ENCODE measurements at regions of chr17 and their contacts with region 1.

Region 1: GRCh38 chr17:41695954-41696756 is 7.5 kb downstream of the EIF1 start:
- DNase-seq: peak; percentile 73
- H3K4me3 ChIP-seq: peak overlapping the region in 1 of 2 experiments; percentile 4; a peak in 1 of 4 replicates
- H3K27ac ChIP-seq: no peak overlapping the region
- H3K4me1 ChIP-seq: peaks cover under 1 to 2% of the 10 kb centered on the region in 2 experiments; a peak in 2 of 4 replicates
- H3K27me3 ChIP-seq: no peaks in the 10 kb centered on the region
- CTCF ChIP-seq: peak; percentile 90
- EP300 ChIP-seq: no peak
- RAD21 ChIP-seq: peak; percentile 52

Region 2: GRCh38 chr17:41251261-41251660 is 444.9 kb before region 1 on chr17:
- CTCF ChIA-PET with region 1: no interaction called
- POLR2A ChIA-PET with region 1: no interaction called
- DNase-seq: no peak
- H3K4me3 ChIP-seq: no peak overlapping the region
- H3K27ac ChIP-seq: no peak overlapping the region
- H3K4me1 ChIP-seq: no peaks in the 10 kb centered on the region
- H3K27me3 ChIP-seq: peaks cover 36% of the 10 kb centered on the region
- CTCF ChIP-seq: no peak
- EP300 ChIP-seq: no peak
- RAD21 ChIP-seq: no peak

Region 3: GRCh38 chr17:41464682-41465081 is 231.5 kb before region 1 on chr17:
- CTCF ChIA-PET with region 1: no interaction called
- POLR2A ChIA-PET with region 1: no interaction called
- DNase-seq: no peak
- H3K4me3 ChIP-seq: no peak overlapping the region
- H3K27ac ChIP-seq: no peak overlapping the region
- H3K4me1 ChIP-seq: peaks cover 11 to 17% of the 10 kb centered on the region in 2 experiments; a peak in 2 of 4 replicates
- H3K27me3 ChIP-seq: no peaks in the 10 kb centered on the region
- CTCF ChIP-seq: no peak
- EP300 ChIP-seq: 0 out of 4 replicates have a peak, but pooled peaks of 1 of the 2 experiments have one; percentile 33
- RAD21 ChIP-seq: no peak

Region 4: DNA sequence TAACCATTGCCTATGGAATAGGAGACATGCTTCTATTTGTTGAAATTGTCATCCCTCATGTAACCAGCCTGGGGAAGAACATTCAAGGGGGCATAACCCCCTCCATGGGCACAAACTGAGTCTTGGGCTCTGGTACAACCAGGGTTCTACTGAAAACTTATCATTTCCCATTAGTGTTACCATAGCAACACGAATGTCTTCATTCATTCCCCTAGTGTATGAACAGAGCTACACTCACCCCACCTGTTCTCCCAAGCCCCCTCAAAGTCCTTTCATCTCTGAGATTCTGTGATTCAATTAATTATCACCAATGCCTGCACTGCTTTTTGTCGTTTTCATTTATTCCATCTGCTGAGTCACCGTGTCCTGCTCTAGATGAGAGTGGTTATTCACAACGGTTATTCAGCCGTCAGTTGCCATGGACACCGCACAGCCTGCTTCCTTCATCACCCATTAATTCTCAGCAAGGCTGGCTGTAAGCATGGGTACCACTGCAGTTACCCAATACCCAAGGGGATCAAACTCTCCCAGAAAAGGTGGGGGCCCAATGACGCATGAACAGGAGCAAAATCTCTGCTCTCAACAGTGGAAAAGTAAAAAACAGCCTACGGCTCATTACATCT is 14.4 kb after region 1 on chr17:
- CTCF ChIA-PET with region 1: interaction called, 125 read pairs
- POLR2A ChIA-PET with region 1: interaction called, 4 read pairs
- DNase-seq: no peak
- H3K4me3 ChIP-seq: no peak overlapping the region
- H3K27ac ChIP-seq: no peak overlapping the region
- H3K4me1 ChIP-seq: peaks cover 0 to 3% of the 10 kb centered on the region in 2 experiments; a peak in 1 of 4 replicates
- H3K27me3 ChIP-seq: no peaks in the 10 kb centered on the region
- CTCF ChIP-seq: no peak
- EP300 ChIP-seq: no peak
- RAD21 ChIP-seq: no peak

Region 5: GRCh38 chr17:41717408-41718286 is 21.5 kb after region 1 on chr17:
- CTCF ChIA-PET with region 1: interaction called, 125 read pairs
- POLR2A ChIA-PET with region 1: interaction called, 5 read pairs
- DNase-seq: no peak
- H3K4me3 ChIP-seq: no peak overlapping the region
- H3K27ac ChIP-seq: no peak overlapping the region
- H3K4me1 ChIP-seq: no peaks in the 10 kb centered on the region
- H3K27me3 ChIP-seq: no peaks in the 10 kb centered on the region
- CTCF ChIP-seq: no peak
- EP300 ChIP-seq: no peak
- RAD21 ChIP-seq: no peak

Region 6: DNA sequence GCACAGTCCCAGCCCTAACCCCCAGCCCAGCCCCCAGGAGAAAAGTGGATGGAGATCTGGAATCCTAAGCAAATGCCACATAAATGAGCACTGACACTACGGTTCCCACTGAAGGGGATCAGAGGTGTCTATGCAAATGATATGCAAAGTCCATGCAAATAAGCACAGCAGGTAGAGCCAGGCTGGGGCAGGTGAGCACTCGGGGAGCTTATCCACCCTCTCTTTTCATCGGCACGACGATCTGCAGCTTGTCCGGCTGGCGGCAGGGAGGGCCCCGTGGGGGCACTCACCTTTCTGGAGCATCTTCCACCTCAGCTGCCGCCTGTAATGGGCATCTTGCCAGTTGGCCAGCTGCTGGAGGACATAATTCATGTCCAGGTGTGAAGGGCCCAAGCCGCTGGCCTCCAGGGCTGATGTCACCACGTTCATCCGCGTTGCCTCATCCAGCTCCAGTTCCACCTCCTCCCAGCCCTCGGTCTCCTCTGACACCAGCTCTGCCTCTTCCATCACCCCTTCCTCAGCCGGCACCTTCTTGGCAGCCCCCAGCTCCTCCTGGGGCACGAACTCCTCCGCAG is 28.4 kb after region 1 on chr17:
- CTCF ChIA-PET with region 1: interaction called, 20 read pairs
- POLR2A ChIA-PET with region 1: interaction called, 5 read pairs
- DNase-seq: no peak
- H3K4me3 ChIP-seq: no peak overlapping the region
- H3K27ac ChIP-seq: no peak overlapping the region
- H3K4me1 ChIP-seq: no peaks in the 10 kb centered on the region
- H3K27me3 ChIP-seq: no peaks in the 10 kb centered on the region
- CTCF ChIP-seq: no peak
- EP300 ChIP-seq: no peak
- RAD21 ChIP-seq: no peak

Region 7: DNA sequence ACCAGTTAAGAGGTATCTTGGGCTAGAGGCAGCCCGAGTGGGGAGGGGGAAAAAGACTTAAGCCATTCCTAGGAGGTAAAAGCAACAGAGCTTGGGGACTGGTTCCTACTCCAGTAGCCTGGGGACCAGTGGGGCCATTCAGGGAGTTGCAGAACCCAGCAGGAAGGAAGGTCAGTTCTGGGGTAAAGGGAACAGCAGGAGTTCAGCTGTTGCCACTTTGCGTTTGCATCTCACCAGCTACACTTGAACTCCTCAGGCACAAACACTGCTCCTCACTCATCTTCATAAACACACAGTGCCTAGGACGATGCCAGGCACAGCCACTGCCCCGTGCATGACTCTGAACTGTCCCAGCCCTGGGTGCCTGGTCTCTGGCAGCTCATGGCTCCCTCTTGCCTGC is 34.3 kb after region 1 on chr17:
- CTCF ChIA-PET with region 1: interaction called, 13 read pairs
- POLR2A ChIA-PET with region 1: interaction called, 4 read pairs
- DNase-seq: no peak
- H3K4me3 ChIP-seq: no peak overlapping the region
- H3K27ac ChIP-seq: no peak overlapping the region
- H3K4me1 ChIP-seq: peaks cover 0 to 11% of the 10 kb centered on the region in 2 experiments; a peak in 1 of 4 replicates
- H3K27me3 ChIP-seq: peaks cover 48% of the 10 kb centered on the region
- CTCF ChIP-seq: no peak
- EP300 ChIP-seq: no peak
- RAD21 ChIP-seq: no peak

Region 8: GRCh38 chr17:41811549-41812380 is 115.6 kb after region 1 on chr17 and contains the start of gene P3H4:
- CTCF ChIA-PET with region 1: interaction called, 10 read pairs
- POLR2A ChIA-PET with region 1: no interaction called
- DNase-seq: peak; percentile 94
- H3K4me3 ChIP-seq: peak within 1 kb of the TSS; percentile 75 to 93
- H3K27ac ChIP-seq: peak within 1 kb of the TSS; percentile 80 to 87
- H3K4me1 ChIP-seq: peaks cover 15 to 24% of the 10 kb centered on the region in 2 experiments; a peak in 2 of 4 replicates
- H3K27me3 ChIP-seq: no peaks in the 10 kb centered on the region
- CTCF ChIP-seq: peak; percentile 61
- EP300 ChIP-seq: peak in 1 of 2 experiments; percentile 12; a peak in 1 of 4 replicates
- RAD21 ChIP-seq: peak; percentile 44; the same call in 1 of the 2 replicates
- polyA plus RNA-seq, gene P3H4: 55.5 and 88.3 TPM in 2 replicates